Heart right ventricle (tissue), 16 donors: ENCODE measurements at regions of chr18 and their contacts with region 1.

Region 1: GRCh38 chr18:62144338-62144737 is 42.5 kb downstream of the PIGN start:
- DNase-seq: no peak
- ATAC-seq: peak in 6 of 8 donors; percentile 58 to 90 (median 78)
- H3K4me3 ChIP-seq: no peak overlapping the region
- H3K27ac ChIP-seq: no peak overlapping the region
- H3K4me1 ChIP-seq: peaks cover 0 to 7% (median 0%) of the 10 kb centered on the region in 9 donors
- H3K27me3 ChIP-seq: no peaks in the 10 kb centered on the region
- CTCF ChIP-seq: no peak

Region 2: DNA sequence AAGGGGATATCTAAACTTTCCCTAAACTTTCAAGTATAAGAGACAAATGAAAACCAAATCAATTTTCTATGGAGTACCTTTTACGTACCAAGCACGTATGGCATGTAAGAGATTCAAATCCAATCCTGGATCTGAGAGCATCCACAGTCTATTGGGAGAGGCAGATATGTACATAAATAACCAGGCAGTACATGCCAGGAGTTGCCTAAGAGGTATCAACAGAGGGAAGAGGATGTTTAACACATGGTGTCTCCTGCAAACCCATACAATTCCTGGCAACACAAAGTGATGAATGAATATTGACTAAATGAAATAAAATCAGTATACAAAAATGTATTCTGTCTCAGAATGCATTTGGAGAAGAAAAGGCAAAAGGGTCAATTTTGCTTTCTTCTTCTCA is 74.0 kb before region 1 on chr18:
- intact Hi-C with region 1: loop called in 1 of 10 experiments (anchors 10 kb)
- DNase-seq: no peak
- ATAC-seq: no peak
- H3K4me3 ChIP-seq: no peak overlapping the region
- H3K27ac ChIP-seq: no peak overlapping the region
- H3K4me1 ChIP-seq: no peaks in the 10 kb centered on the region
- H3K27me3 ChIP-seq: no peaks in the 10 kb centered on the region
- CTCF ChIP-seq: no peak